ENCODE measurements at regions of chr14 and their contacts with region 1.

Region 1: GRCh38 chr14:92880869-92881289 is 42.1 kb upstream of the CHGA start:
- DNase-seq: peak; percentile 63
- H3K4me3 ChIP-seq: no peak overlapping the region; a peak in 1 of 4 replicates
- H3K27ac ChIP-seq: peak overlapping the region in 1 of 2 experiments; percentile 19; a peak in 1 of 4 replicates
- H3K4me1 ChIP-seq: peaks cover 0 to 35% of the 10 kb centered on the region in 2 experiments; a peak in 1 of 4 replicates
- H3K27me3 ChIP-seq: peaks cover 22% of the 10 kb centered on the region; the same call in 1 of the 2 replicates
- CTCF ChIP-seq: no peak
- EP300 ChIP-seq: no peak
- RAD21 ChIP-seq: peak; percentile 88

Region 2: DNA sequence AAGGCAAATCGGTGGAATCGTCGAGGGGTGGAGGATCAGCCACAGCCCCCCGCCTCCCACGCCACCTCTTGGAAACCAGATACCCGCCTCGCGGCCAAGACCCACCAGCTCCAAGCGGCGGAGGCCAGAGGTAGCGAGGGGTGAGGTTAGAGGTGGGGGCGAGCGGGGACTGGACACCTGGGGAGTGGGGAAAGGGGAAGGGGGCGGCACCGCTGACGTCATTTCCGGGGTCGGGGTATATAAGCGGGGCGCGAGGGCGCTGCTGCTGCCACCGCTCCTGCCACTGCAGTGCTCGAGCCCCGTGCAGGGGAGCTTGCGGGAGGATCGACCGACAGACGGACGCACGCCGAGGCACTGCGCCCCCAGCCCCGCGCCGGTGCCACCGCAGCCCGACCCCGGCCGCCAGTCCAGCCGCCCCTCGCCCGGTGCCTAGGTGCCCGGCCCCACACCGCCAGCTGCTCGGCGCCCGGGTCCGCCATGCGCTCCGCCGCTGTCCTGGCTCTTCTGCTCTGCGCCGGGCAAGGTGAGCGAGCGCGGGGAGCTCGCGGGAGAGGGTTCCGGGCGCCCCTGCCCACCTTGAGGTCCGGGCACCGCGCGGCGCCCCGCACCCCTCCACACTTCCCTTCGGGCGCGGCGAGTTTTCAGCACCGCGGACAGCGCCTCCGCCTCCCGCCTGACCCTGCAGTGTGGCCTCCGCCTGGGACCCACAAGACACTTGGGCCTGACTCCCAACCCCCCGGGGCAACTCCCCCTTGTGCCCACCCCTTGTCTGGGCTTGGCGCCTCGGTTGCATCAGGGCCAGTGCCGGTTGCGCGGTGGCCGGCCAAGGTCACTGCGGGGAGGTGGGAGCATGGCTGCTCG is 42.2 kb after region 1 on chr14 and contains the start of gene CHGA:
- CTCF ChIA-PET with region 1: interaction called, 56 read pairs
- POLR2A ChIA-PET with region 1: interaction called, 288 read pairs
- DNase-seq: peak; percentile 98
- H3K4me3 ChIP-seq: peak within 1 kb of the TSS in 1 of 2 experiments; percentile 56; a peak in 2 of 4 replicates
- H3K27ac ChIP-seq: peak within 1 kb of the TSS in 1 of 2 experiments; percentile 90; a peak in 2 of 4 replicates
- H3K4me1 ChIP-seq: peaks cover 0 to 70% of the 10 kb centered on the region in 2 experiments; a peak in 2 of 4 replicates
- H3K27me3 ChIP-seq: peaks cover 7% of the 10 kb centered on the region; the same call in 1 of the 2 replicates
- CTCF ChIP-seq: no peak
- EP300 ChIP-seq: no peak
- RAD21 ChIP-seq: no peak; the same call in 1 of the 2 replicates
- polyA plus RNA-seq, gene CHGA: 5.6 and 11.7 TPM in 2 replicates

Region 3: GRCh38 chr14:92937051-92937937 is 56.4 kb after region 1 on chr14:
- CTCF ChIA-PET with region 1: interaction called, 34 read pairs
- POLR2A ChIA-PET with region 1: interaction called, 141 read pairs
- DNase-seq: no peak
- H3K4me3 ChIP-seq: no peak overlapping the region
- H3K27ac ChIP-seq: peak overlapping the region in 1 of 2 experiments; percentile 60; a peak in 2 of 4 replicates
- H3K4me1 ChIP-seq: peaks cover 0 to 41% of the 10 kb centered on the region in 2 experiments; a peak in 1 of 4 replicates
- H3K27me3 ChIP-seq: no peaks in the 10 kb centered on the region
- CTCF ChIP-seq: no peak
- EP300 ChIP-seq: no peak
- RAD21 ChIP-seq: no peak

Region 4: DNA sequence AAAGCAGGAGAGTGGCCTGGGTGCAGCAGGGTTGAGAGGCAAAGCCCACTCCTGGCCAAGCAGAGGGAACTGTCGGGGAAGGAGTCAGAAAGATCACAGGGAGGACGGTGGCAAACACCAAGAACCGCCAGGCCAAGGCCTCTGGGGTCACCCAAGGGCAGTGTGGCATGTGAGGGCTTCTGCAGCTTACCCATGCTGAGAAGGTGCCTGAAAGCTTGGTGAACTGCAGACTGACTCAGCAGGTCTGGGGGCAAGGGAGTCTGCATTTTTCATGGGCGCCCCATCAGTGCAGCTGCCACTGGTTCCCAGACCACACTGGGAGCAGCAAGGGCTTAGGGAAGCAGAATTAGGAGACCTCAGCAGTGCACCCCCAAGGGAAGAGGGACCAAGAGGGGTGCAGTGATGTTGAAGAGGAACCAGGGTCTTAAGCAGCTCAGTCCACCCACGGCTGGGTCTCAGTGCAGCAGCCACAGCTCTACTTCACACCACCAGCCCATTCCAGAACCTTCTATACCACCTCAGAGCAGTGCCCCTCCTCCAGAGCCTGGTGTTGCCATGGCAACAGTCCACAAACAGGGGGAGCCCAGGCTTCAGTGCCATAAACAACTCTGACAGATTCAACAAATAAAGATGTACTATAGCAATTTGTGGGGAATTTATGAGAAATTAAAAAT is 175.4 kb after region 1 on chr14:
- CTCF ChIA-PET with region 1: no interaction called
- POLR2A ChIA-PET with region 1: no interaction called
- DNase-seq: no peak
- H3K4me3 ChIP-seq: no peak overlapping the region
- H3K27ac ChIP-seq: no peak overlapping the region; a peak in 1 of 4 replicates
- H3K4me1 ChIP-seq: peaks cover 11 to 35% of the 10 kb centered on the region in 2 experiments; a peak in 2 of 4 replicates
- H3K27me3 ChIP-seq: no peaks in the 10 kb centered on the region
- CTCF ChIP-seq: no peak
- EP300 ChIP-seq: no peak; a peak in 1 of 4 replicates
- RAD21 ChIP-seq: no peak

Region 5: GRCh38 chr14:93132470-93133065 is 251.7 kb after region 1 on chr14:
- CTCF ChIA-PET with region 1: interaction called, 12 read pairs
- POLR2A ChIA-PET with region 1: no interaction called
- DNase-seq: peak; percentile 63
- H3K4me3 ChIP-seq: no peak overlapping the region
- H3K27ac ChIP-seq: no peak overlapping the region
- H3K4me1 ChIP-seq: no peaks in the 10 kb centered on the region; a peak in 1 of 4 replicates
- H3K27me3 ChIP-seq: no peaks in the 10 kb centered on the region
- CTCF ChIP-seq: peak; percentile 54
- EP300 ChIP-seq: no peak
- RAD21 ChIP-seq: peak; percentile 54

Measured in SK-N-SH (cell line).